Posterior vena cava (tissue), 2 donors: ENCODE measurements at regions of chr12 and their contacts with region 1.

Region 1: DNA sequence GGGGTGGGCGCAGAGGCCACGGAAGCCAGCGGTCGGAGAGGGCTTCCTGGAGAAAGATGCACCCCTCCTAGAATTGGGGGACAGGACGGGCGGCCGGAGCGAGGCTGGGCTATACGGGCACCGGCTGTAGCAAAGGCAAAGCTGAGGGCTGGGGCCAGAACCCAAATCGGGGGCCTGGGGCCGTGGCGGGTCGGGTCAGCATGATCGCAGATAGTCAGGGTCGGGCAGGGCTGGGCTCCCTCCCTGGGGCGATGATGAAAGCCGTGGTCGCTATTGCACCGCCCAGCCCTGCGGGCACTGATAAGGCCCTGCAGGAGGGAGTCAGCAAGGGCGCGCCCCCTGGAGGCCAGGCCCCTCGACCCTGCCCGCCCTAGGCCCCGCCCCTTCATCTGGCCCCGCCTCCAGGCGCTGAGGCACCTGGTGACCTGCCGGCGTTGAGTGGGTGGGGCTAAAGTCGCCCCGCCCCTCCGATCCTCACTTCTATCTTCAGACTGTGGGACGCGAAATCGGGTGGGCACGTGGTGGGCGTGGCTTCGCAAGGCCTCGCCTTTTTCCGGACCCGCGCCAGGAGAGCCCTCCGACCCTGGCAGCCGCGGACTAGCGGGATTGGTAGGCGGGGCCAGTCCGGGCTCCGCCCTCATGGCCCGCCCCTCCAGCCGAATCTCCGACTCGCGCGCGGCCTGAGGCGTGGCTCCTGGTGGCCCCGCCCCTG is 418 bp upstream of the SH2B3 start:
- DNase-seq: peak; percentile 98

Region 2: GRCh38 chr12:109995686-109996482 is 1409.4 kb before region 1 on chr12 and contains the start of gene GIT2:
- intact Hi-C with region 1: loop called in 1 of 2 experiments (anchors 5 kb)
- DNase-seq: peak; percentile 98
- total RNA-seq, gene GIT2: 44.9 to 48.0 TPM

Region 3: DNA sequence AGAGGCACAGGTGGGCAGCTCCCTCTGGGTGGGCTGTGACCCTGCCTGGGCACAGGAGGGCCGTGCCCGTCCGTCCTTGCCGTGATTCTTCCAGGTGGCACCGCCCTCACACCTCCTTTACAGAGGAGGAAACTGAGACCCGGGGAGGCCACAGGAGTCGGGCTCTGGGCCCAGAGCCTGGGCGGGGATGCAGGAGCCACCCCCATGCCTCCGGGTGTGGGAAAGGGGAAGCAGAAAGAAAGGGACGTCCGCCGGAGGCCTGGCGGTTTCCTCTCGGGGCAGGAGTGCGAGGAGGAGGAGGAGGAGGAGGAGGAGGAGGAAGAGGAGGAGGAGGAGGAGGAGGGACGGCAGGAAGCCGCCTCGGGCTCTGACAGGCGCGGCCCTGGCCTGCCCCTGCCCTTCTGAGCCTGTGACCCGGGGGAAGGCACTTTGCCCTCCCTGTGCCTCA is 23.4 kb after region 1 on chr12:
- intact Hi-C with region 1: loop called in 1 of 2 experiments (anchors 2 kb)
- DNase-seq: peak; percentile 89

Region 4: GRCh38 chr12:111451649-111452129 is 46.4 kb after region 1 on chr12:
- intact Hi-C with region 1: loop called in 1 of 2 experiments (anchors 5 kb)
- DNase-seq: no peak